Sciatic nerve (tissue), 2 donors: ENCODE measurements at regions of chr17 and their contacts with region 1.

Region 1: DNA sequence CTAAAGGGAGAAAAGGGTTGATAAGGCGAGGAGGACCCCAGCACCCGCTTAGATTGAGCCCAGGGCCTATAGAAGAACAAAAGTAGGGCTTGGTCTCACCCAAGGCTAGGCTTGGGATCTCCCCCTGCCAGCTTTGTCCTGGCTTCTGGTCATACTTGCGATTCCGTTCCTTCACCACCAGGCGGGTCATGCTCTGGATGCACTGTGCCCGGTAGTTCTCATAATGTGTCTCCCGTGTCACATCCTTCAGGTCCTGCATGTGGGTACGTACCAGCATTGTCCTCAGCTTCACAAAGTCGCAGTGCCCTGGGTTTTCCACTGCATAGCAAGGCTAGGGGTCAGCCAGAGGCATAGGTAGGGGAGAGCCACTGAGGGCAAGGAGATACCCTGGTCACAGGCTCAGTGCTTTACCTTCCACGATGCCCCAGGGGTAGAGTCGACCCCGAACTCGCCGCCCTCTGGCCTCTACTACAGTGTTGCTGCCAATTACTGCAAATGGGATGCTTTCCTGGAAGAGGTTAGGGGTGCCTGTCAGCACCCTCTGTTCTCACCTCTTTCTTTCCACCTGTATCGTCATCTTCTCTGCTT is 6.5 kb upstream of the MTMR4 start:
- DNase-seq: no peak
- ATAC-seq: no peak

Region 2: GRCh38 chr17:58487589-58488427 is 33.1 kb before region 1 on chr17 and contains the start of gene HSF5:
- intact Hi-C with region 1: no loop called
- DNase-seq: no peak
- ATAC-seq: no peak
- total RNA-seq, gene HSF5: 0.27 TPM

Region 3: DNA sequence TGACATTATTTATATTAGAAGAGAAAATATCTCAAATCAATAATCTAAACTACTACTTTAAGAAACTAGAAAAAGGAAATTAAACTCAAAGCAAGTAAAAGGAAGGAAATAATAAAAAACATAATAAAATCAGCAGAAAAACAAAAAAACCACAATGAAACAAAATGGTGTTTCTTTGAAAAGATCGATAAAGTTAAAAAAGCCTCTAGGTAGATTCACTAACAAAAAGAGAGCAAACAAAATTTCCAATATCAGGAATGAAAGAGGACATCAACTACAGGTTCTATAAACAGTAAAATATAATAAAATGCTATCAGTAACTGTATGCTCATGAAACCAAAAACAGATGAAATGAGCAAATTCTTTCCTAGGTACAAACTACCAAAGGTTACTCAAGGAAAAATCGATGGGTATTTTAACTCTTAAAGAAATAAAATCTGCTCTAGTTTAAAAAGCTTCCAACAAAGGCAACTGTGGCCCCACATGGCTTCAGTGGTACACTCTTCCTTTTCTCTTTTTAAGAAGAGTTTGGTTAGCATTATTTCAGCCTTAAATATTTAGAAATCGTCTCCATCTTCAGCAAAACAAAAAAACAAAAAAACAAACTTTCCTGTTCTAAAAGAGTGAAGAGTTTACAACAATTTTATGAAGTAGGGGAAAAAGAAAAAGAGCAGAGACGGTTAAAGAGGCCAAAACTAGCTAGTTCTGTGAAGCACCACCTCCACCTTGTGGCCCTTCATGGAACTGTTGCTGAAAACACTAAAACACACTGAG is 483.6 kb after region 1 on chr17:
- intact Hi-C with region 1: loop called (anchors 5 kb)
- DNase-seq: peak; percentile 77
- ATAC-seq: peak; percentile 84